ENCODE measurements at regions of chr7 and their contacts with region 1.

Region 1: DNA sequence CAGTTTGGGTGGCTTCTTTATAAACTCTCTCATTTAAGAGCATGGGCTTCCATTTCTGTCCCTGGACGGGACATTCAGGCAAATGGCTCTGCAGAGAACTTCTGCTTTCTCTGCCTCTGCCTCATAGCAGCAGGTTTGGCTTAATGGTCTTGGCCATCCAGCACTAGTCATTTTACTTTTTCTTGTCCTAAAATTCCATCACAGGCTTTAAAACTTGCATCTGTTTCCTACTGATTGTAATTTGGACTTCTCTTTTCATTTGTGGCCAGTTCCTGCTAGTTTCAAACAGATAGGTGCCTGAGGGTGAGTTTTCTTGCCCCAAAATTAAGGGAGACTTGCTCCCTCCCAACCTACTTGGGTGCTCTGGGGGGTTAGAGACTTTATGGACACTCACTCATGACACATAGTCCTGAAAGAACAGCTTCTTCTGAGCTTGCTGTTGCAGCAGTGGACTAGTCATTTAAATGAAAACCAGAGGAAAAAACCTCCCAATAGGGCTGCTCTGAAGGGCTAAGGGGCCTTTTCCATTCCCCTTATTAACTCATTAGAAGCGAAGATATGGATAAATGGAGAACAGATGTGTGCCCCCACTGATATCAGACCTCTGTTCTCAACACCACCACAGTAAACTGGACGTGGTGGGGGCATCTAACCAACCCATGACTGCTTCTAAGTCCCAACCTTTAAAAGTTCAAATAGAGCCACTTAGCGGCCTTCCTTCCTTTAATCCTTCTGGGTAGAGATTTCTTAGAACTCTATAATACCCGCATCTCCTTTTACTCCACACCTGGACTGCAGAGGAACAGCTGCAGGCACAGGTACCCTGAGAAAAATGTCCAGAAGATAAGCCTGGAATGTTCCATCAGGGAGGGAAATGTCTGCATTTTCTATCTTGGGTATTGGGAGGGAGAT is 38.8 kb downstream of the SVOPL start:
- DNase-seq: no peak
- ATAC-seq: no peak
- H3K4me3 ChIP-seq: no peak overlapping the region
- H3K27ac ChIP-seq: no peak overlapping the region
- H3K4me1 ChIP-seq: peaks cover 0 to 6% (median 0%) of the 10 kb centered on the region in 9 donors
- H3K27me3 ChIP-seq: peaks cover 0 to 56% (median 36%) of the 10 kb centered on the region in 7 donors
- CTCF ChIP-seq: no peak

Region 2: GRCh38 chr7:138151731-138152577 is 510.4 kb before region 1 on chr7:
- intact Hi-C with region 1: no loop called
- DNase-seq: no peak
- ATAC-seq: no peak
- H3K4me3 ChIP-seq: no peak overlapping the region
- H3K27ac ChIP-seq: no peak overlapping the region
- H3K4me1 ChIP-seq: no peaks in the 10 kb centered on the region
- H3K27me3 ChIP-seq: peaks cover 0 to 4% (median 0%) of the 10 kb centered on the region in 7 donors
- CTCF ChIP-seq: no peak

Region 3: GRCh38 chr7:138698281-138698680 is 35.9 kb after region 1 on chr7:
- intact Hi-C with region 1: loop called in 1 of 10 experiments (anchors 1 kb)
- DNase-seq: no peak
- ATAC-seq: no peak
- H3K4me3 ChIP-seq: no peak overlapping the region
- H3K27ac ChIP-seq: no peak overlapping the region
- H3K4me1 ChIP-seq: no peaks in the 10 kb centered on the region
- H3K27me3 ChIP-seq: peaks cover 0 to 8% (median 0%) of the 10 kb centered on the region in 7 donors
- CTCF ChIP-seq: no peak

Region 4: GRCh38 chr7:138726288-138726687 is 64.0 kb after region 1 on chr7:
- intact Hi-C with region 1: no loop called
- DNase-seq: no peak
- ATAC-seq: no peak
- H3K4me3 ChIP-seq: no peak overlapping the region
- H3K27ac ChIP-seq: no peak overlapping the region
- H3K4me1 ChIP-seq: no peaks in the 10 kb centered on the region
- H3K27me3 ChIP-seq: no peaks in the 10 kb centered on the region
- CTCF ChIP-seq: no peak

Measured in heart right ventricle (tissue), 16 donors.